ENCODE measurements at regions of chr17 and their contacts with region 1.

Region 1: GRCh38 chr17:43125133-43125966 is at the start of gene BRCA1:
- DNase-seq: peak; percentile 86 to 99 (median 94)
- ATAC-seq: peak; percentile 99
- H3K4me3 ChIP-seq: peak within 1 kb of the TSS; percentile 63 to 74
- H3K4me3 Mint-ChIP-seq: peak within 1 kb of the TSS; percentile 94
- H3K27ac ChIP-seq: peak within 1 kb of the TSS; percentile 57 to 84
- H3K27ac Mint-ChIP-seq: peak within 1 kb of the TSS; percentile 92
- H3K4me1 ChIP-seq: peaks cover 15% of the 10 kb centered on the region
- H3K4me1 Mint-ChIP-seq: peaks cover 30% of the 10 kb centered on the region
- H3K27me3 ChIP-seq: no peaks in the 10 kb centered on the region
- H3K27me3 Mint-ChIP-seq: no peaks in the 10 kb centered on the region
- CTCF ChIP-seq: no peak
- total RNA-seq, gene BRCA1: 1.1 to 1.3 TPM

Region 2: GRCh38 chr17:42832974-42833766 is 292.2 kb before region 1 on chr17 and contains the start of gene PSME3:
- CTCF ChIA-PET with region 1: no interaction called
- POLR2A ChIA-PET with region 1: no interaction called
- intact Hi-C with region 1: loop called in 1 of 2 experiments (anchors 2 kb)
- DNase-seq: peak; percentile 75 to 95 (median 88)
- ATAC-seq: peak; percentile 87
- H3K4me3 ChIP-seq: peak within 1 kb of the TSS; percentile 93 to 100
- H3K4me3 Mint-ChIP-seq: peak within 1 kb of the TSS; percentile 97
- H3K27ac ChIP-seq: peak within 1 kb of the TSS; percentile 95
- H3K27ac Mint-ChIP-seq: peak within 1 kb of the TSS; percentile 99
- H3K4me1 ChIP-seq: peaks cover 17% of the 10 kb centered on the region
- H3K4me1 Mint-ChIP-seq: peaks cover 31% of the 10 kb centered on the region
- H3K27me3 ChIP-seq: no peaks in the 10 kb centered on the region
- H3K27me3 Mint-ChIP-seq: no peaks in the 10 kb centered on the region
- CTCF ChIP-seq: no peak
- total RNA-seq, gene PSME3: 74.1 to 74.2 TPM

Region 3: DNA sequence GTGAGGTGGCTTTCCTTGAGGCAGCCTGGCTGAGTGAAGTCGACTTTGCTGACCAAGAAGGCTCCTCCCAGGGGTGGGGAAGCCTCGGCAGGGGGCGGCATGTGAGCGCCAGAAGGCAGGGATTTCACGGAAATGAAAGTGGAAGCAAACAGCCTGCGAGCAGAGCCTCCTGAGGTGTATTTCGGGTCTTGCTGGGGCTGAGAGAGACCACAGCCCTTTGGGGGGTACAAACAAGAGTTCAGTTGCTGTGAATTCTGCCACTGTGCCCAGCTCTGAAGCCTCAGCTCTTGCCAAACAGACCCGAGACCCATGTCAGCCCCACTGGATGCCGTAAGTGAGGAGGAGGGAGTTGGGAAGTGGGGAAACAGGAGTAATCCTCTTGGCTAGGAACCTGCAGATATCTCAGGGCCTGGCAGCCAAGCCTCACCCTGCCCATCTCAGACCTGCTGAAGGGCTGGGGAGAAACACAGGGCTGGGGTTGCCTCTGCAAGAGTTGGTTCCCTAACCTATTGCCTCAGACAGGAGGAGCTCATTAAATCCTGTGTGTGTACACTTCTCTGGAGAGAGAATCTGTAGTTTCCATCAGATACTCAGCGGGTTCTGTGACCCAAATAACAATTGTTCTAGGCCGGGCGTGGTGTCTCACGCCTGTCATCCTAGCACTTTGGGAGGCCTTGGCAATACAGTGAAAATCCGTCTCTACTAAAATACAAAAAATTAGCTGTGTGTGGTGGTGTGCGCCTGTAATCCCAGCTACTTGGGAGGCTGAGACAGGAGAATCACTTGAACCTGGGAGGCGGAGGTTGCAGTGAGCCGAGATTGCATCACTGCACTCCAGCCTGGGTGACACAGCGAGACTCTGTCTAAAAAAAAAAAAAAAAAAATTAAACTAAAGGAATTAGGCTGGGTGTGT is 118.5 kb before region 1 on chr17 and contains the start of gene IFI35:
- CTCF ChIA-PET with region 1: no interaction called
- POLR2A ChIA-PET with region 1: no interaction called
- intact Hi-C with region 1: loop called in 1 of 2 experiments (anchors 1 kb)
- DNase-seq: peak; percentile 65 to 92 (median 88)
- ATAC-seq: peak; percentile 99
- H3K4me3 ChIP-seq: peak within 1 kb of the TSS; percentile 75 to 84
- H3K4me3 Mint-ChIP-seq: peak within 1 kb of the TSS; percentile 99
- H3K27ac ChIP-seq: peak within 1 kb of the TSS; percentile 82 to 89
- H3K27ac Mint-ChIP-seq: peak within 1 kb of the TSS; percentile 99
- H3K4me1 ChIP-seq: peaks cover 11% of the 10 kb centered on the region
- H3K4me1 Mint-ChIP-seq: peaks cover 27% of the 10 kb centered on the region
- H3K27me3 ChIP-seq: no peaks in the 10 kb centered on the region
- H3K27me3 Mint-ChIP-seq: no peaks in the 10 kb centered on the region
- CTCF ChIP-seq: peak; percentile 57
- total RNA-seq, gene IFI35: 24.3 to 25.6 TPM

Region 4: DNA sequence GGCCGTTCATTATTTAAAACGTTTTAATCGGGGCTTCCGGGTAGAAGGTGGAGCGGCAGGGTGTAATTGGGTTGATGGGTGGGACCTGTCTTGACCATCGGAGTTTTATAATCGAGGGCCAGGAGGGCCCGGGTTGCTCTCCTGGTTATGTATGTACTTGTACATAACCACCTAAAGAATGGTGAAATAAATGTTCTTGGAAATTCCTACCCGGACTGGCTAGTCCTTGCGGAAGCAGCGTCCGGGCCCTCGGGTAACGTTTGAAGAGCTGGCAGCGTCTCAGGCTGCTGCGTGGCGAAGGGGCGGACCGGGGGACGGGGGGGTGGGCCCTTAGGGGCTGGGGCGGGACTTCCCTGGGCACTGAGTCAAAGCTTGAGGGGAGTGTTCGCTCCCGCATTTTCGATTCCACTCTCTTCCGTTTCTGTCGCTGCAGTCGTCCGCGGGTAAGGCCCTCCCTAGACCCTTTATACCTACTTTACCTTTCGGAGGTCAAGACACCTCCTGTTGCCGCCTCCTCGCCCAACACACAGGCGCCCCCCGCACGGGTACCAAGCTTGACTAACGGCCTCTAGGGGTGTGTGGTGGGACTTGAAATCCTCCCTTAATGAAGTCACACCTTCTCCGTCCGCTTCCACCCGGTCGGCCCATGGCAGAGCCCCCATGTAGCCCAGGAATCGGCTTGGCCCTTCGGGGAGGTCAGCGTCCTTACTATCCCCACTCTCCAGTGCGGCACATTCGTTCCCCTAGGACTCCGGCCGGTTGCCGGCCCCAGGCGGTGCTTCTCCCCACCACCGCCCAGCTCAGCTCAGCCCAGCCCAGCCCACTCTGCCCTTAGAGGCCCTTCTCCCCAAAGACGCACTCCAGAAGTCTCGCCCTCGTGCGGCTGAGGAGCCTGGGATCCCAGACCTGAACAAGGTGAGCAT is 86.4 kb after region 1 on chr17 and contains the start of gene TMEM106A:
- CTCF ChIA-PET with region 1: no interaction called
- POLR2A ChIA-PET with region 1: no interaction called
- intact Hi-C with region 1: loop called in 1 of 2 experiments (anchors 1 kb)
- DNase-seq: peak; percentile 50 to 89 (median 76)
- ATAC-seq: peak; percentile 92
- H3K4me3 ChIP-seq: peak within 1 kb of the TSS; percentile 82 to 95
- H3K4me3 Mint-ChIP-seq: peak within 1 kb of the TSS; percentile 98
- H3K27ac ChIP-seq: peak within 1 kb of the TSS; percentile 75 to 82
- H3K27ac Mint-ChIP-seq: peak within 1 kb of the TSS; percentile 96
- H3K4me1 ChIP-seq: peaks cover 25% of the 10 kb centered on the region
- H3K4me1 Mint-ChIP-seq: peaks cover 40% of the 10 kb centered on the region
- H3K27me3 ChIP-seq: no peaks in the 10 kb centered on the region
- H3K27me3 Mint-ChIP-seq: no peaks in the 10 kb centered on the region
- CTCF ChIP-seq: peak; percentile 58
- total RNA-seq, gene TMEM106A: 8.9 to 9.2 TPM

Region 5: GRCh38 chr17:43330876-43331639 is 205.7 kb after region 1 on chr17:
- CTCF ChIA-PET with region 1: no interaction called
- POLR2A ChIA-PET with region 1: no interaction called
- intact Hi-C with region 1: loop called in 1 of 2 experiments (anchors 5 kb)
- DNase-seq: no peak
- ATAC-seq: no peak
- H3K4me3 ChIP-seq: no peak overlapping the region
- H3K4me3 Mint-ChIP-seq: no peak overlapping the region
- H3K27ac ChIP-seq: no peak overlapping the region
- H3K27ac Mint-ChIP-seq: no peak overlapping the region
- H3K4me1 ChIP-seq: peaks cover 7% of the 10 kb centered on the region
- H3K4me1 Mint-ChIP-seq: peaks cover 7% of the 10 kb centered on the region
- H3K27me3 ChIP-seq: no peaks in the 10 kb centered on the region
- H3K27me3 Mint-ChIP-seq: peaks cover 15% of the 10 kb centered on the region
- CTCF ChIP-seq: no peak

Measured in CD8-positive, alpha-beta T cell (primary cell).